MCF 10A (cell line): ENCODE measurements at regions of chr14 and their contacts with region 1.

Region 1: GRCh38 chr14:96852823-96853422 is 55.7 kb downstream of the VRK1 start:
- DNase-seq: peak; percentile 64
- H3K4me3 Mint-ChIP-seq: no peak overlapping the region
- H3K27ac Mint-ChIP-seq: no peak overlapping the region
- H3K4me1 Mint-ChIP-seq: no peaks in the 10 kb centered on the region
- H3K27me3 Mint-ChIP-seq: no peaks in the 10 kb centered on the region
- CTCF ChIP-seq: peak; percentile 50

Region 2: DNA sequence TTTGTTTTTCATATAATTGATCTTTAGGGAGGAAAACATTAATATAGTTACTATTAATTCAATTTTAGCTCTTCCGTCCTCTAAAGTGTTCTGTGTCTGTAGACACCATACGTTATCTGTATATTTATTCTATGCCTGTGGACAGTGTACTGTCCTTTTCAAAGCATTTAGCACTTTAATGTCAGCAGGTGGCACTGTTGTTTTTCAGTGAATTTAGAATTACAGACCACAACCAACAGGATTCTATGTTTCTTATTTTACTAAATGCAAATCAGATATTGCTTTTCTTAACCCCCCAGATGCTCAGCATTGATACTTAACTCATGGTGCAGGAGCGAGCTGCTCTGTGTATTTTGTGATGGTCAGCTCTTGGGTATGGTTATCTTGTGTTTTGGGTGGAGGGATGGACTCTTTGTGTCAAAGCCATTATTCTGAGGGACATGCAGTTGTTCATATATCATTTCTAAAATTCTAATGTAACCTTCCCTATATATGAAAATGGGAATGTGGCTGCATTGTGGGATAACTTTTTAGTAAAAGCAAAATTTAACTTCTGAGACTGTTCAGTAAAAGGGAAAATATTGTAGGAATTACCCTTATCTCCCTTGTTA is 285.5 kb before region 1 on chr14:
- CTCF ChIA-PET with region 1: interaction called, 19 read pairs
- POLR2A ChIA-PET with region 1: no interaction called
- intact Hi-C with region 1: loop called (anchors 5 kb)
- DNase-seq: peak; percentile 31
- H3K4me3 Mint-ChIP-seq: no peak overlapping the region
- H3K27ac Mint-ChIP-seq: no peak overlapping the region
- H3K4me1 Mint-ChIP-seq: no peaks in the 10 kb centered on the region
- H3K27me3 Mint-ChIP-seq: no peaks in the 10 kb centered on the region
- CTCF ChIP-seq: peak; percentile 60

Region 3: DNA sequence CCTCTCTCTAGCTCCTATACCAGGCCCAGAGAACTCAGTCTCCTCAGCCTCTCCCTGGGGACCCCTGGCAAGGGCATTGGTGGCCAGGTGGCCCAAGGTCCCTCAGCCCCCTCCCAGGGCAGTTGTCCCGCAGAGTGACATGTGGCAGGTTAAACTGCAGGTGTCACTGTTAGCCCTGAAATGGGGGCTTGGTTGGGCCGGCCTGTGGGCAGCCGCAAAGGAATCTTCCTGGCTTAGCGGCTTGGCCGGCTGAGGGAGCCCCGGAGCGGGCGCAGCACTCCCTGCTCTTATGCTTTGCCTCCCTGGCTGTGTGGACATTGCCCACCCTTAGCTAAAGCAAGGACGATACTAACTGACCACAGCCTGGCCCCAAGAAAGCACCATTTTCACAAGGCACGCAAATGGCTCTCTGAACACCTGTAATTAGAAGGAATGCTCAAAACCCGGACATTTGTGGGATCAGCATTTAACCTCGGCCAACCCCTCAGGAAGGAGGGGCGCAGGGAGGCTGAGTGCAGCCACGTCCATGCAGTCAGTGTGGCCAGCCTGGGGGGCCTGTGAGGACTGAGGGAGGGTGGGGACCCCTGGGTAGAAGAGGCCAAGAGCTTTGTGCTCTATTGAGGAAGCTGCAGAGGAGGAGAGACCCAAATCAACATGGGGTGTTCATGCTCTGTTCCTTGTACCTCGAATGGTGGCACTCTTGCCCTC is 268.6 kb before region 1 on chr14:
- CTCF ChIA-PET with region 1: interaction called, 5 read pairs
- POLR2A ChIA-PET with region 1: no interaction called
- intact Hi-C with region 1: loop called (anchors 5 kb)
- DNase-seq: peak; percentile 61
- H3K4me3 Mint-ChIP-seq: no peak overlapping the region
- H3K27ac Mint-ChIP-seq: no peak overlapping the region
- H3K4me1 Mint-ChIP-seq: no peaks in the 10 kb centered on the region
- H3K27me3 Mint-ChIP-seq: no peaks in the 10 kb centered on the region
- CTCF ChIP-seq: peak; percentile 44

Region 4: GRCh38 chr14:96741151-96741977 is 111.6 kb before region 1 on chr14:
- CTCF ChIA-PET with region 1: interaction called, 13 read pairs
- POLR2A ChIA-PET with region 1: no interaction called
- intact Hi-C with region 1: no loop called
- DNase-seq: peak; percentile 43
- H3K4me3 Mint-ChIP-seq: peak overlapping the region; percentile 79
- H3K27ac Mint-ChIP-seq: no peak overlapping the region
- H3K4me1 Mint-ChIP-seq: peaks cover 6% of the 10 kb centered on the region
- H3K27me3 Mint-ChIP-seq: peaks cover 62% of the 10 kb centered on the region
- CTCF ChIP-seq: peak; percentile 96

Region 5: DNA sequence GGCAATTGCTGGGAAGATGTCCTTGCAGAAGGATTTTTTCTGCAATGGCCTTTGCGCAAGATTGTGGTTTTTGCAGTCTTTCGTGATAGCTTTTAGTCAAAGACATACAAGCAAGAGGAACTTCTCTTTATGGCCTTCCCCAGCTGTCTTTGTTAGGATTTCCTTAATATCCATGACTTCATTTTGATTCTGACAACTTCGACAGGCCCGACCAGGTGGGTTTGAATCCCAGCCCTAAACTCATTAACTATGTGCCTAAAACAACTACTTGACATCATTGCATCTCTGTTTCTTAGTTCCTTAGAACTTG is 69.1 kb before region 1 on chr14:
- CTCF ChIA-PET with region 1: interaction called, 11 read pairs
- POLR2A ChIA-PET with region 1: interaction called, 14 read pairs
- intact Hi-C with region 1: loop called (anchors 5 kb)
- DNase-seq: peak; percentile 72
- H3K4me3 Mint-ChIP-seq: peak overlapping the region; percentile 66
- H3K27ac Mint-ChIP-seq: peak overlapping the region; percentile 77
- H3K4me1 Mint-ChIP-seq: peaks cover 18% of the 10 kb centered on the region
- H3K27me3 Mint-ChIP-seq: no peaks in the 10 kb centered on the region
- CTCF ChIP-seq: no peak

Region 6: GRCh38 chr14:96796851-96797581 is 55.9 kb before region 1 on chr14 and contains the start of gene VRK1:
- CTCF ChIA-PET with region 1: interaction called, 15 read pairs
- POLR2A ChIA-PET with region 1: interaction called, 15 read pairs
- intact Hi-C with region 1: loop called (anchors 2 kb)
- DNase-seq: peak; percentile 97
- H3K4me3 Mint-ChIP-seq: peak within 1 kb of the TSS; percentile 85
- H3K27ac Mint-ChIP-seq: peak within 1 kb of the TSS; percentile 85
- H3K4me1 Mint-ChIP-seq: peaks cover 23% of the 10 kb centered on the region
- H3K27me3 Mint-ChIP-seq: no peaks in the 10 kb centered on the region
- CTCF ChIP-seq: no peak
- total RNA-seq, gene VRK1: 14.7 and 17.7 TPM in 2 replicates

Region 7: DNA sequence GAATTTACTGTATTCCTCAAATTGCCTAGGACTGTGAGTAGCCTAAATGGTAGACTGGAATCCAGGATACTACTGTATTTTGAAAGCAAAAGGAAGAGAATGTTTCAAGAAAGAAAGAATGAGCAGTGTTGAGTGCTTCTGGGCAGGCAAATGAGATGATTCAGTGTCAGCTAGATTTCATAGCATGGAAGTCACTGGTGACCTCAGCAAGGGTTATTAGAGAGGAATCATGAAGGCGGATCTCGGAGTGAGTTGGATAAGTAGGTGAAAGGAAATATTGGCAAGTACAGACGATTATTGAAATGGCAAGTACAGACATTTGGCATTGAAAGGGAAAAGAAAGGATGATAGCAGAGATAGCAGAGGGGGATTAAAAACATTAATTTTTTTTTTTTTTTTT is 28.6 kb before region 1 on chr14:
- CTCF ChIA-PET with region 1: interaction called, 14 read pairs
- POLR2A ChIA-PET with region 1: interaction called, 7 read pairs
- intact Hi-C with region 1: no loop called
- DNase-seq: peak; percentile 24
- H3K4me3 Mint-ChIP-seq: peak overlapping the region; percentile 2
- H3K27ac Mint-ChIP-seq: peak overlapping the region; percentile 7
- H3K4me1 Mint-ChIP-seq: peaks cover 45% of the 10 kb centered on the region
- H3K27me3 Mint-ChIP-seq: no peaks in the 10 kb centered on the region
- CTCF ChIP-seq: no peak